ENCODE measurements at regions of chr22 and their contacts with region 1.

Region 1: DNA sequence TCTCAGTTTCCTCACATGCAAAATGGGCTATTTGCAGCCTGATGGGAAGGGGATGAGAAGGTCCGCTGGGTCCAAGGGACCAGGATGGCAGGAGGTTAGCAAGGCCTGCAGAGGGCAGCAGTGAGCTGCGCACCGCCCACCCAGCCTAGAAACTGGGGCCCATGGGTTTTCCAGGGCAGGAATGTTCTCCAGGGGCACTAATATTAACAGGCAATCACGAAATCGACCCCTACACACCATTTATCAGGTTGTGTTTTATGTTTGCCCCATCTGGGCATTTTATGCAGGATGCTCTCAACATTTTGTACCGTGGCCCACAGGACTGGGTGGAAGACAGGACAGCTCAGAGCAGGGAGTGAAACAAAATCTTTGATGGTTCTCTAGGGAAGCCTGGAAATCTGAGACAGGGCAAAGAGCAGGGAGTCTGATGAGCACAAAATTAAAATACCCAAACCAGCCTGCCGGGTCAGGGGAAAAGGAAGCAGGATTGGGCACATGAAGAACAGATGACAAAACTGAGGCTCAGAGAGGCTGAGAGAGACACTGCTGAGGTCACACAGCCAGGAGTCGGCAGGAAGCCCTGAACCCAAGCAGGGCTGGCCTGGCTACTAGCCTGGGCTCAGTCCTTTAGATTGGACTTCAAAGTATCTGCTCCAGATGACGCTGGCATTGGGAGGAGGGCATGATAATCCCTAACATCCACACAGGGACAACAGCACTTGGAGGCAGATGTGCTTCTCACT is 1.6 kb upstream of the BCR start:
- DNase-seq: peak; percentile 39 to 90
- H3K4me3 ChIP-seq: no peak overlapping the region
- H3K27ac ChIP-seq: no peak overlapping the region
- H3K4me1 ChIP-seq: peaks cover 5 to 29% (median 18%) of the 10 kb centered on the region in 4 experiments
- H3K27me3 ChIP-seq: peaks cover 0 to 6% (median 2%) of the 10 kb centered on the region in 4 experiments; a peak in 1 of 7 replicates
- CTCF ChIP-seq: peak; percentile 94 to 99 (median 99)
- EP300 ChIP-seq: peak in 1 of 2 experiments; percentile 24; a peak in 1 of 3 replicates
- POLR2A ChIP-seq: no peak
- RAD21 ChIP-seq: peak; percentile 97 to 99

Region 2: DNA sequence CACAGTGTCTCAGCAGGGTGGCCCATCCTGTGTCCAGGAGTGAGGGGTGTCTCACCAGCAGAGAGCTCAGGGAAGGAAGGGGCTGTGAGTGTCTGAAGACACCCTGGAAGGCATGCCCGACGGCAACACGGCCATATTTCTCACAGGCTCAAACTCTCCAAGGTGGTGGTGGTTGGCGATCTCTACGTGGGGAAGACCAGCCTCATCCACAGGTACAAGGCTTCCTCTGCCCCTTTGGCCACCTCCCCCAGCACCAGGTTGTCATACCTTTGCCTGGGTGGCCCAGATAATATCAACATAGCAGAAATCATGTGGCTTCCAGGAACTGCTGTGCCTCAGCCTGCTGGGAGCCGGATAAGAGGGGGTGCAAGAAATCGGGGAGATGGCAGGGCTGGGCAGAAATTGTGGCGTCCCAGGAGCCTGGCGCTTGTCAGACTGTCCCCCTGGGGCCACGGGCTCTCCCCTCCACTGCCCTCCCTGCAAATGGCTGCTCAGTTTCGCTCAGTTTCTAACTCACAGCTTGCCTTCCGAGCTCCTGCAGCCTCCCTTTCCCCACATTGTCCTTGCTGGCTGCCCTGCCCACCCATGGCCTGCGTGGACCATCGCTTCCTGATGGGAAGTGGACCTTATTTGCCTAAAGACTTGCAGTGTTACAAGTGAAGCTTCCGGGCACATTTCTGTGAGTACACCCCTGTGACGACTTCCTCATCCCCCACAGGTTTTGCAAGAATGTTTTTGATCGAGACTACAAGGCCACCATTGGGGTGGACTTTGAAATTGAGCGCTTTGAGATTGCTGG is 26.2 kb before region 1 on chr22:
- CTCF ChIA-PET with region 1: interaction called, 42 read pairs
- POLR2A ChIA-PET with region 1: interaction called, 3 read pairs
- DNase-seq: no peak
- H3K4me3 ChIP-seq: no peak overlapping the region
- H3K27ac ChIP-seq: no peak overlapping the region
- H3K4me1 ChIP-seq: peaks cover 0 to 27% (median 12%) of the 10 kb centered on the region in 4 experiments; a peak in 5 of 7 replicates
- H3K27me3 ChIP-seq: no peaks in the 10 kb centered on the region; a peak in 1 of 7 replicates
- CTCF ChIP-seq: no peak
- EP300 ChIP-seq: no peak
- POLR2A ChIP-seq: no peak
- RAD21 ChIP-seq: no peak

Region 3: DNA sequence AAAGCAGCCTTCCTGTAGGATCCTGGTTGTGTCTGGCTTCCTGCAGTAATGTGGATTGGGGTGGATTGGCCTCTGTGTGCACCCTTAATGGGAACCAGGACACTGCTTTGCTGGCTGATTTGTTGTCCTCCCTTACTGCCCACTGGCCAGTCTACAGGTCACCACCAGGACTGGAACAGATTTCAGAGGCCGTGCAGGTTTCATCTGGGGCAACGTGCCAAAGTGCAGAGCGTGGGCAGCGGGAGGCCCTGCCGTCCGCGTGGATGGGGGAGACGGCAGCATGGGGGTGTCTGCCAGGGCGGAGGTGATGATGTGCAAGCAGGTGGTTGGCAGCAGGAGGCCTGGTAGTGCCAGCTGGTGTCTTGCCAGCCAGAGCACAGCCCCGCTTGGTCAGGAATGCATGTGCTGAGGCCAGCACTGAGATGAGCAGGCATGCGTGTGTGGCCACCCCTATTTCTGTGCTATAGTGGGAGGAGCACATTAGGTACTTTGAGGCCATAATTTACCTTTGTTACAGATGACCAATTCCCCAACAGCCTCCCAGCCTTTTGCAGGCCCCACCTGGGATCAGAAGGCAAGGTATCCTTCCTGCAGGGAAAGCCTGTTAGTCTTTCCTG is 26.0 kb after region 1 on chr22:
- CTCF ChIA-PET with region 1: interaction called, 10 read pairs
- POLR2A ChIA-PET with region 1: interaction called, 4 read pairs
- DNase-seq: no peak
- H3K4me3 ChIP-seq: no peak overlapping the region
- H3K27ac ChIP-seq: no peak overlapping the region
- H3K4me1 ChIP-seq: peaks cover 0 to 14% (median 3%) of the 10 kb centered on the region in 4 experiments; a peak in 4 of 7 replicates
- H3K27me3 ChIP-seq: no peaks in the 10 kb centered on the region
- CTCF ChIP-seq: no peak
- EP300 ChIP-seq: no peak
- POLR2A ChIP-seq: no peak
- RAD21 ChIP-seq: no peak

Region 4: GRCh38 chr22:23225724-23226496 is 47.2 kb after region 1 on chr22:
- CTCF ChIA-PET with region 1: interaction called, 15 read pairs
- POLR2A ChIA-PET with region 1: interaction called, 17 read pairs
- DNase-seq: no peak
- H3K4me3 ChIP-seq: no peak overlapping the region
- H3K27ac ChIP-seq: no peak overlapping the region
- H3K4me1 ChIP-seq: peaks cover 16 to 43% (median 27%) of the 10 kb centered on the region in 4 experiments
- H3K27me3 ChIP-seq: no peaks in the 10 kb centered on the region
- CTCF ChIP-seq: no peak
- EP300 ChIP-seq: no peak
- POLR2A ChIP-seq: no peak
- RAD21 ChIP-seq: no peak

Region 5: DNA sequence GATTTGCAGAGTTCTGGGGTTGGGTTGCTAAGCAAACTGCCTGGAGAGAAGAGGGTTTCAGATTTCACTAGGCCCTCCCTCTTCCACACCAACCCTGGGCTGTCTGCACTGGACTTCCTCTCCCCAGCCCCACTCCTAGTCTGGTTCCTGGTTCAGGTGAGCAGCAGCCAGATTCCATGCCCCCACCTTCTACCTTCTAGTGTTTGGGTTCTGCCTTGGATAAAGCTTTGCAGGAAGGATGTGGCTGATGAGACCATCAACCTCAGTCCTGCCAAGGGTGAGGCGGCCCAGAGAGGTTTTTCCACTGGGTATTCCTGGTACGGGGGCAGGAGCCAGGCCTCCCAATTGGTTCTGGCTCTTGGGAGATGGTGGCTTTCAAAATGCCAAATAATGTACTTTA is 69.9 kb after region 1 on chr22:
- CTCF ChIA-PET with region 1: interaction called, 32 read pairs
- POLR2A ChIA-PET with region 1: interaction called, 34 read pairs
- DNase-seq: no peak
- H3K4me3 ChIP-seq: no peak overlapping the region
- H3K27ac ChIP-seq: no peak overlapping the region
- H3K4me1 ChIP-seq: peaks cover 26 to 41% (median 36%) of the 10 kb centered on the region in 4 experiments
- H3K27me3 ChIP-seq: no peaks in the 10 kb centered on the region
- CTCF ChIP-seq: no peak
- EP300 ChIP-seq: no peak
- POLR2A ChIP-seq: no peak
- RAD21 ChIP-seq: no peak

Region 6: GRCh38 chr22:23270212-23270733 is 91.6 kb after region 1 on chr22:
- CTCF ChIA-PET with region 1: interaction called, 358 read pairs
- POLR2A ChIA-PET with region 1: interaction called, 16 read pairs
- DNase-seq: no peak
- H3K4me3 ChIP-seq: no peak overlapping the region
- H3K27ac ChIP-seq: no peak overlapping the region
- H3K4me1 ChIP-seq: peaks cover 0 to 29% (median 20%) of the 10 kb centered on the region in 4 experiments; a peak in 6 of 7 replicates
- H3K27me3 ChIP-seq: no peaks in the 10 kb centered on the region
- CTCF ChIP-seq: peak in 2 of 3 experiments; percentile 50 to 58; a peak in 3 of 4 replicates
- EP300 ChIP-seq: no peak
- POLR2A ChIP-seq: no peak; a peak in 1 of 3 replicates
- RAD21 ChIP-seq: peak; percentile 57 to 69